Heart left ventricle (tissue), 16 donors: ENCODE measurements at regions of chr5 and their contacts with region 1.

Region 1: DNA sequence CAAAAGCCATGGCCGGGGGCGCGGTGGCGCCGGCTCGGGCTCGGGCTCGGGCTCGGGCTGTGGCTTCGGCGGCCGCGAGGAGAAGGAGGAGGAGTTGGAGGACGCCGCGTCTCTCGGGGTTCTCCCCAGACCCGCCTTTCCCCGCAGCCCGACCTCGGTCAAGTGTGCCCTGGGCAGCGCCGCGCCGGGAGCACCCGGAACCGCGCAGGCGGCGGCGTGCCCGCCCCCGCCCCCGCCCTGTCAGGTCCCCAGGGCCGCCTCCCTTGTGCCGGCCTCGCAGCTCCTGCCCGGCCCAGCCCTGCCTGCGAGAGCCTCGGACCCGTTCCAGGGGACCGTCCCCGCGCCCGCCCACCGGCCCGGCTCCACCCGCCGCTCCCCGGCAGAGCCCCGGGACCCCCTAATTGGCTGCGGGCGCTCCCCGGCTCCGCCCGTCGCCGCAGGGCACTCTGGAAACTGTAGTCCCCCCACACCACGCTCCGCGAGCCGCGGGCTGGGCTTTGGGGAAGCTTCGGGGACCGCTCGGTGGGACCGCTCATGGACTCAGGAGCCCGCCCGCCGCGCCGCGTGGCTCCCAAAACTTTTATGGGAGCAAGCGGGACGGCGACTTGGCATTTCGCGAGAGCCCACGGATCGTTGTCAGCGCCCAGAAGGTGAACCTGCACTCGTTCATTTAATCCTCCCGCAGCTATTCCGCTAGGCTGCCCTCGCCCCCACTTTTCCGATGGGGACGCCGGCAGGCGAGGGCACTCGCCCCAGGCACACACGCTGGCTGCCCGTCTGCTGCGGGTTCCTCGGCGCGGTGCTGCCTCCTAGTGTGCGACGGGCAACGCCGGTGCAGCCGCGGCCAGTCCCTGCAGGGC is at the start of gene STK10:
- DNase-seq: peak; percentile 93 to 98 (median 95)
- ATAC-seq: peak; percentile 91 to 97 (median 95)
- H3K4me3 ChIP-seq: peak within 1 kb of the TSS; percentile 67 to 97 (median 89)
- H3K27ac ChIP-seq: peak within 1 kb of the TSS; percentile 63 to 98 (median 92)
- H3K4me1 ChIP-seq: peaks cover 3 to 38% (median 22%) of the 10 kb centered on the region in 12 donors
- H3K27me3 ChIP-seq: no peaks in the 10 kb centered on the region
- CTCF ChIP-seq: peak; percentile 83 to 97 (median 94)
- POLR2A ChIP-seq: peak in 1 of 2 donors; percentile 74
- total RNA-seq, gene STK10: 5.5 to 52.9 (median 10.3) TPM

Region 2: DNA sequence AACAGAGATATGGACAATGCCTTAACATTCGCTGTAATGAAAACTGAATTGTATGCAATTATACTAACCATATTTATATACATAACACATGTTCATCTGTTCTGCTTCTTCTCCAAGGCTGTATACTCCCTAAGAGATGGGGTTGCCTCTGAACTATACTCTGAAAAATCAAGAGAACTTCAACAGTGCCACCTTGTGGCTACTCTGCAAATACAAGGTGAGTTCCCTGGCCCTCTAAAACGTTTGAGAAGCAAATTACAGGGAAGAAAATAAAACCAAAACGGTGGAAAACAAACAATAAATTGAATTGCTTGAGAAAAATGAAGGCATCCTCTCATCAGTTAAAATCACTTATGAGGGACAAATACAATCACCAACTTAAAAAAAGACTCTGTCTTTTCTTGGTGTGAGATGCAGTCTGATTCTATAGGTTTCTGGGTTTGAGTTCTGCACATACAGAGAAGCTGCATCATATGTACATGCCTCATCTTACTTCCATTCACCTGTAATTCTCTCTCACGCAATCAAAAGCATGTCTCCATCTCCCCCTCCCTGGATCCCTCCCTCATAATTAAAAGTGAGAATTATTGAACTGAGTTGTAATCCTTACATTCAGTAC is 280.4 kb before region 1 on chr5:
- intact Hi-C with region 1: loop called in 6 of 10 experiments (anchors 2 to 10 kb)
- DNase-seq: peak in 3 of 5 donors; percentile 30 to 49 (median 40)
- ATAC-seq: peak; percentile 49 to 85 (median 79)
- H3K4me3 ChIP-seq: no peak overlapping the region
- H3K27ac ChIP-seq: no peak overlapping the region
- H3K4me1 ChIP-seq: peaks cover 0 to 44% (median 27%) of the 10 kb centered on the region in 12 donors
- H3K27me3 ChIP-seq: no peaks in the 10 kb centered on the region
- CTCF ChIP-seq: peak; percentile 68 to 87 (median 78)
- POLR2A ChIP-seq: no peak

Region 3: GRCh38 chr5:171927345-171927941 is 260.8 kb before region 1 on chr5:
- intact Hi-C with region 1: loop called in 1 of 10 experiments (anchors 10 kb)
- DNase-seq: no peak
- ATAC-seq: no peak
- H3K4me3 ChIP-seq: no peak overlapping the region
- H3K27ac ChIP-seq: no peak overlapping the region
- H3K4me1 ChIP-seq: peaks cover 0 to 21% (median 2%) of the 10 kb centered on the region in 12 donors
- H3K27me3 ChIP-seq: no peaks in the 10 kb centered on the region
- CTCF ChIP-seq: peak in 3 of 12 donors; percentile 8 to 18 (median 17)
- POLR2A ChIP-seq: no peak

Region 4: GRCh38 chr5:171989276-171989675 is 199.0 kb before region 1 on chr5:
- intact Hi-C with region 1: no loop called
- DNase-seq: no peak
- ATAC-seq: no peak
- H3K4me3 ChIP-seq: no peak overlapping the region
- H3K27ac ChIP-seq: no peak overlapping the region
- H3K4me1 ChIP-seq: peaks cover 0 to 36% (median 11%) of the 10 kb centered on the region in 12 donors
- H3K27me3 ChIP-seq: no peaks in the 10 kb centered on the region
- CTCF ChIP-seq: no peak
- POLR2A ChIP-seq: no peak

Region 5: GRCh38 chr5:172106511-172107356 is 81.5 kb before region 1 on chr5:
- intact Hi-C with region 1: loop called (anchors 1 to 2 kb)
- DNase-seq: peak in 4 of 5 donors; percentile 42 to 82 (median 58)
- ATAC-seq: peak in 3 of 4 donors; percentile 21 to 27 (median 26)
- H3K4me3 ChIP-seq: peak overlapping the region in 9 of 12 donors; percentile 9 to 46 (median 29)
- H3K27ac ChIP-seq: peak overlapping the region in 1 of 12 donors; percentile 32
- H3K4me1 ChIP-seq: peaks cover 2 to 83% (median 55%) of the 10 kb centered on the region in 12 donors
- H3K27me3 ChIP-seq: no peaks in the 10 kb centered on the region
- CTCF ChIP-seq: peak; percentile 84 to 99 (median 90)
- POLR2A ChIP-seq: no peak

Region 6: GRCh38 chr5:172283020-172283861 is 95.0 kb after region 1 on chr5 and contains the start of gene UBTD2:
- intact Hi-C with region 1: loop called in 5 of 10 experiments (anchors 2 to 10 kb)
- DNase-seq: peak; percentile 89 to 93 (median 90)
- ATAC-seq: peak; percentile 69 to 94 (median 88)
- H3K4me3 ChIP-seq: peak within 1 kb of the TSS; percentile 58 to 98 (median 90)
- H3K27ac ChIP-seq: peak within 1 kb of the TSS; percentile 85 to 96 (median 92)
- H3K4me1 ChIP-seq: peaks cover 0 to 39% (median 25%) of the 10 kb centered on the region in 12 donors
- H3K27me3 ChIP-seq: no peaks in the 10 kb centered on the region
- CTCF ChIP-seq: peak; percentile 39 to 75 (median 62)
- POLR2A ChIP-seq: peak in 1 of 2 donors; percentile 40
- total RNA-seq, gene UBTD2: 9.1 to 13.3 (median 9.7) TPM

Region 7: DNA sequence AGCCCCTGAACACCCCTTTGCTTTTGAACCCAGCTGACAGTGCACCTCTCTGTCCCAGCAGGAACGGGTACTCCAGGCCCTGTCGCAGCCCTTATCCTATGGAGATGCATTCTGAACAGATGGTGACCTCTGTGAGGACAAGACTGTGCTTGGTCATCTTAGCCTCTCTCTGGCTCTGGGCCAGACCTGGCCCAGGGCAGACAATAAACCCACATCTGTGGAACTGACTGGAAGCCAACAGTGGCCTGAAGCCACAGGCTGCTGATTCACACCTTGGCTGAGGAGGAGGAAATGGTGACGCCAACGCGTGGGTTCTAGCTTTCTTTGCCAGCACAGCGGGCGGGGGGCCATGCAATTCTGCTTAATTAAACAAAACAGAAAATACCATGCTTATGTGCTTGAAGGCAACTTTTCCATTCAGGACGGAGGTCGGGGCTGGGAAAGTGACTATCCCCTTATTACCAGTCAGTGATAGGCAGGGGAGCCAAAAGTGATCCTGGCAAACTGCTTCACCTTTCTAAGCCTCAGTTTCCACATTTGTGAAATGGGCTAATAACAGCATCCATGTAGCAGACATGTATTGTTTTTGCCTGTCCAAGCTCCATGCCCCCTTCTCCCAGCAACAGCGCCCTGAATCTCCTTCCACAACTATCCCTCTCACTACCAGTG is 255.3 kb after region 1 on chr5:
- intact Hi-C with region 1: loop called in 1 of 10 experiments (anchors 5 kb)
- DNase-seq: peak; percentile 85 to 94 (median 86)
- ATAC-seq: peak; percentile 56 to 84 (median 83)
- H3K4me3 ChIP-seq: no peak overlapping the region
- H3K27ac ChIP-seq: peak overlapping the region in 11 of 12 donors; percentile 21 to 82 (median 66)
- H3K4me1 ChIP-seq: peaks cover 2 to 67% (median 41%) of the 10 kb centered on the region in 12 donors
- H3K27me3 ChIP-seq: no peaks in the 10 kb centered on the region
- CTCF ChIP-seq: no peak
- POLR2A ChIP-seq: no peak